Activated T-helper 1 cell treated with anti-CD3 and anti-CD28 coated beads, Interleukin-12 subunit alpha, Interleukin-12 subunit beta, Interleukin-2, Interleukin-4 antibody, amounts not matched to agents 30 ng/mL and 10 ng/mL and 1 ng/mL, durations not matched to agents 14 hours and 24 hours and 36 hours (primary cell): ENCODE measurements at regions of chr4 and their contacts with region 1.

Region 1: GRCh38 chr4:56435306-56435926 is at the start of gene PPAT:
- DNase-seq: peak; percentile 98
- H3K4me3 Mint-ChIP-seq: peak within 1 kb of the TSS; percentile 94
- H3K27ac Mint-ChIP-seq: peak within 1 kb of the TSS; percentile 99
- H3K4me1 Mint-ChIP-seq: peaks cover 52% of the 10 kb centered on the region
- H3K27me3 Mint-ChIP-seq: peaks cover 3% of the 10 kb centered on the region
- total RNA-seq, gene PPAT: 57.4 and 60.1 TPM in 2 replicates

Region 2: GRCh38 chr4:55617587-55618197 is 817.7 kb before region 1 on chr4:
- intact Hi-C with region 1: no loop called
- DNase-seq: no peak
- H3K4me3 Mint-ChIP-seq: no peak overlapping the region
- H3K27ac Mint-ChIP-seq: no peak overlapping the region
- H3K4me1 Mint-ChIP-seq: no peaks in the 10 kb centered on the region
- H3K27me3 Mint-ChIP-seq: no peaks in the 10 kb centered on the region

Region 3: DNA sequence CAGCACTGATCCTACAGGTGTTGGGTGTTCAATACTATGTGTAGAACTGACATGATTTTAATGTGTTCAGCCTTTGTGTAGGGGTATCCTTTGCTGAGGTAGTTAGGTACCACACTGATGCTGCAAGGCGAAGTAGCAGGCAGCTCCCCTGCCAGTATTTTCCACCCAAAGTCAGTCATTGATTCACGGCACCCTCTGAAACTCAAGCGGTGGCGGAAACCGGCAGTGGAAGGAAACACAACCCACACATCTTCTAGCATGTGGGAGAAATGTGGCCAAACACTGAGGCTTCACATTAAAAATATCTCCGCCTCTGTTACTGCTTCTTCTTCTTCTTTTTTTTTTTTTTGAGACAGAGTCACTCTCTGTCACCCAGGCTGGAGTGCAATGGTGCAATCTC is 174.4 kb before region 1 on chr4:
- intact Hi-C with region 1: loop called (anchors 2 kb)
- DNase-seq: peak; percentile 34
- H3K4me3 Mint-ChIP-seq: peak overlapping the region; percentile 39
- H3K27ac Mint-ChIP-seq: peak overlapping the region; percentile 22
- H3K4me1 Mint-ChIP-seq: peaks cover 32% of the 10 kb centered on the region
- H3K27me3 Mint-ChIP-seq: peaks cover 19% of the 10 kb centered on the region

Region 4: DNA sequence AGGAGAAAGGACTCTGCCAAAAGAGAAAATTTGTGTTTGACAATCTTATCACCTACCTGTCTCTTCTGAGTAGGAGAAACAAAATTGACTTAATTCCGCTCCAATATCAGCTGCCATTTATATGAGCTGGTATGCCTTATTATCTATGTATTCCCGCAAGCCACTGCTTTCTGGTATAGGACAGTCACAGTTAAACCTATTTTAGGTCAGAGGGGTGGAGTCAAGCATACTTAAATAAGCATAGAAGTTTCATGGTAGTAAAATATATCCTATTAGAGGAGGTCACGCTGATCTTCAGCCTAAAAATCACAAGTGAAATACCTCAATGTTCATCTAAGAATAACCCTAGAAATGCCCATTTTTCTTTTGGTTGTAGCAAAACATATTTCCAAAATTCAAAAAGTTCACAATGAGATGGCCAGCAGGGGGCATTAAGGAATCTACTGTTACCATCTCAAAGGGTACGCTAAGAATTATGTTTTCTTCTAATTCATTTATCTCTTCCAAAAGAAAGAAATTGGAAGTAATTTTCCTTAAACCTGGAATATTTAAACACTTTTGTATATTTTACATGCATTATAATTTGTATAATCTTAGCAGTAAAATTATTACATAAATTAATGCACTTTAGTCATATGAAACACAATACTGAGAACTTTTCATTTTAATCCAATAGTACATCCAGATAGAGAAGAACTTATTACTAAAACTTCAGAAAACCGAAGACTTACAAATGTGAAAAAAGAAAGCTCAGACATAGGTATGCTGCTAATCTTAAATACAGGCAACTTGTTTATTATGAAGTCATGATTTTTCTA is 10.5 kb before region 1 on chr4:
- intact Hi-C with region 1: loop called (anchors 1 kb)
- DNase-seq: no peak
- H3K4me3 Mint-ChIP-seq: no peak overlapping the region
- H3K27ac Mint-ChIP-seq: no peak overlapping the region
- H3K4me1 Mint-ChIP-seq: peaks cover 34% of the 10 kb centered on the region
- H3K27me3 Mint-ChIP-seq: no peaks in the 10 kb centered on the region

Region 5: DNA sequence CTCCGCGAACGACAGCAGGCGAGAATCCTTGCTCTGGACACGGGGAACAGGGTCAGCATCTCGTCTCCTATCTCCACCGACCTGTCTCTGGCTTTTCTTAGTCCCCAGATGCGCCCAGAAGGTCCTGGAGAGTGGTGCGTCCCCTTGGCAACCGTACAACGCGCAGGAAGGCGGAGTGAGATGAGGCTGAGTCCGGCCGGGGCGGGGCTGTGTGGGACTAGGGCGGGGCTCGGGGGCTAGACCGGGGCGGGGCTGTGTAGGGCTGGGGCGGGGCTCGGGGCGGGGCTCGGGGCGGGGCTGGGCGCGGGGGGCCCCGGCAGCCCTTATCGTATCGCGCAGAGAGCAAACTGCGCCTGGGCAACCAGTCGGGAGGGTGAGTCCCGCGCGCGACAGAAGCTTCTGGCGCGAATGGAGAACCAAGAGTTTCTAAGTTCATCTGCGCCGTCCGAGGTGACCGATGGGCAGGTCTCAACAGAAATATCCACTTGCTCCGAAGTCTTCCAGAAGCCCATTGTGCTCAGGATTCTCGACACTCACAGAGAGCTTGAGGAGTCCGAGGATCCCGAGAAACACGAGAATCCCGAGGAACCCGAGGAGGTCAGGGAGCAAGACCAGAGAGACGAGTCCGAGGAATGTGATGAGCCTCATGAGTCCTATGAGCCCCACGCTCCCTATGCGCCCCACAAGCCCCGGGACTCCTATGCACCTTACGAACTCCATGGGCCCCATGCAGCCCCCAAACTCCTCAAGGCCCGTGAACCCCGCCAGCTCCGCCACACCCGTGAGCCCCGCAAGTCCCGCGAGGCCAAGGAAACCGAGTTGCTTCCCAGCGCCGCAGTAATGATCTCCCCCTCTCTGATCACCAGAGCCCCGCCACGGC is 95.1 kb after region 1 on chr4:
- intact Hi-C with region 1: loop called (anchors 1 kb)
- DNase-seq: peak; percentile 63
- H3K4me3 Mint-ChIP-seq: peak overlapping the region; percentile 57
- H3K27ac Mint-ChIP-seq: no peak overlapping the region
- H3K4me1 Mint-ChIP-seq: no peaks in the 10 kb centered on the region
- H3K27me3 Mint-ChIP-seq: peaks cover 18% of the 10 kb centered on the region

Region 6: DNA sequence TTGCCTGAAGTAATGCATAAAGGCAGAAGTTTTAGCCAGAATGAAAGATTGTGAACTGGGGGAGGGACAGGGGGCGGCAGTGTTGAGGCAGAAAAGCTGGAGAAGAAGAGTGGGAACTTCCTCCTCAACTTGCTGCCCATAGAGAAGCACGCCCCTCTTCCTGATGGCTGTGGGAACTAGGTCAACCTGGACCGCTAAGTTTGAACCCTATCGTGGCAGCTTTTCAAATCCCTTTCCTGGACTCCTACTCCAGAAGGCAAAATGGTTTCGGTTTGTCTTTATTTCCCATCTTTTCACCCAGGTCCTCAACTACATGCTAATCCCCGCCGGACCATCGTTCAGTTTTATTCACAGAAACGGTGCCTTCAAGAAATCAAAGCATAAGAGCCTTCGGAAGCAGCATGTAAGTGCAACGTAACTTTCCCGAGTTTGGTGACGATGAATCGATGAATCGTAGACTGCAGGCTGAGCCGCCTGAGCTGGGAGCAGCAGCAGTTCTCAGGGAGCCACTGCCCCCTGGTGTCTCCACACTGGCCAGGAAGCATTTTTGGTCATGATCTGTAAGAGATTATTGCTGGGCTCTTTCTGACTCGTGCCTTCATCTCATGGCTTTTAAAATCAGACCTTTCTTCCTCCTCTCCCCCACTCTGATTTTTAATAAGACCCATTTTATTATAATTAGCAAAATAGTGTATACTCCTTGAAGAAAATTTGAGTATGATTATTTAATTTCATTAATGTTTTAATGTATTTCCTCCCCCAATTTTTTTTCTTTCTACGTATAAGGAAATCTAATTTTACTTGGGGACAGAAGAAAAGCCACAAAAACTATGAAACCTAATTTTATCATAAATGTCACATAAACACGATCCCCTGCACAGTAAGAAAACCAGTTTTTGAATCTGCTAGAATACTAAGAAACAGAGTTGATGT is 364.7 kb after region 1 on chr4:
- intact Hi-C with region 1: loop called (anchors 2 kb)
- DNase-seq: peak; percentile 73
- H3K4me3 Mint-ChIP-seq: peak overlapping the region; percentile 88
- H3K27ac Mint-ChIP-seq: peak overlapping the region; percentile 49
- H3K4me1 Mint-ChIP-seq: peaks cover 30% of the 10 kb centered on the region
- H3K27me3 Mint-ChIP-seq: peaks cover 13% of the 10 kb centered on the region